HEK293T (cell line): ENCODE measurements at regions of chr22 and their contacts with region 1.

Region 1: GRCh38 chr22:41468381-41469217 is at the starts of genes ACO2 and PHF5A:
- DNase-seq: peak; percentile 94

Region 2: GRCh38 chr22:41381329-41382097 is 87.1 kb before region 1 on chr22 and contains the start of gene TEF:
- CTCF ChIA-PET with region 1: no interaction called
- POLR2A ChIA-PET with region 1: interaction called, 16 read pairs
- DNase-seq: peak; percentile 99

Region 3: DNA sequence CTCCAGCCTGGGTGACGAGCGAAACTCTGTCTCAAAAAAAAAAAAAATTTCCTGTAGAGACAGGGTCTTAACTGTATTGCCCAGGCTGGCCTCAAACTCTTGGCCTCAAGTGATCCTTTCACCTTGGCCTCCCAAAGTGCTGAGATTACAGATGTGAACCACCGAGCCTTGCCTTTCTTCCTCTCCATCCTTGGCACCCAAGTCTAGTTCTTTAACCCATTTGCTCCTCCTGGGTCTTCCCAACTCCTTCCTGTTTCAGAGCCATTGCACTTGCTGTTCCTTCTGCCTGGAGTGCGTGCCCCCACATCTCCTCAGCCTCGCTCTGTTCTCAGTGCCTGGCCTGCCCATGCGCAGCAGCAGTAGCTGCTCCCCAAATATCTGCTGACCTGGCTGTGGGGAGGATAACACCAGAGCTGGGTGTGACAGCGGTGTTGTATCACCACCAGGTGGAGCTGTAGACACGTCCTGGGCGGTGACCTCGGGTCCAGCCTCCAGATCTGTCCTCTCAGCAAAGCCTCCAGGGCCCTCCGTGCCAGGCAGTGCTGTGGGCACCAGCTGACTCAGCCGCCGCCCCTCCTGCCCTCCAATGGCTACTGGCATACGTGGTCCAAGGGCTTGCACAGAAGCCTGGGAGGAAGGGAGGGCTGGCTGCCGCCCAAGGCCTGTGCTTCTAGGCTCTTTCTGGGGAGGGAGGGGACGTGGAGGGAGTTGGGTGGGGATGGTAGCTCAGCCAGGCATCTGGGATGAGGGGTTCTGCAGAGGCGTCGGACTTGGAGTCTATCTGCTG is 64.9 kb before region 1 on chr22:
- CTCF ChIA-PET with region 1: interaction called, 3 read pairs
- POLR2A ChIA-PET with region 1: interaction called, 10 read pairs
- DNase-seq: peak; percentile 94

Region 4: DNA sequence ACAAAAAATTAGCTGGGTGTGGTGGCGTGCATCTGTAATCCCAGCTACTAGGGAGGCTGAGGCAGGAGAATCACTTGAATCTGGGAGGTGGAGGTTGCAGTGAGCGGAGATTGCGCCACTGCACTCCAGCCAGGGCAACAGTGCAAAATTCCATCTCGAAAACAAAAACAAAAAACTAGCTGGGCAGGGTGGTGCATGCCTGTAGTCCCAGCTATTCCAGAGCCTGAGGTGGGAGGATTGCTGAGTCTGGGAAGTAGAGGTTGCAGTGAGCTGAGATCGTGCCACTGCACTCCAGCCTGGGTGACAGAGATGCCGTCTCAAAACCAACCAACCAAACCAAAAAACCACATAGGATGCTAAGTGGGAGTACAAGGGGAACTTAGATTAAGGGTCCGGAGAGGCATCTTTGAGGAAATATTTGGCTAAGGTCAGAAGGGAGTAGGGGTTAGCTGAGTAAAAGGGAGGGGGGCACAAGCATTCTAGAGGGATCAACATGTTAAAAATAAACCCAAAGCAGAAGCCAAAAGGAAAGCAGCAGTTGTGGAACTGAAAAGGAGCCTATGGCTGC is 10.4 kb before region 1 on chr22:
- CTCF ChIA-PET with region 1: no interaction called
- POLR2A ChIA-PET with region 1: interaction called, 19 read pairs
- DNase-seq: no peak

Region 5: GRCh38 chr22:41479671-41480396 is 11.2 kb after region 1 on chr22:
- CTCF ChIA-PET with region 1: interaction called, 3 read pairs
- POLR2A ChIA-PET with region 1: interaction called, 26 read pairs
- DNase-seq: no peak

Region 6: GRCh38 chr22:41636467-41636866 is 167.9 kb after region 1 on chr22:
- CTCF ChIA-PET with region 1: no interaction called
- POLR2A ChIA-PET with region 1: no interaction called
- DNase-seq: no peak